GM10248 (cell line): ENCODE measurements at regions of chr9 and their contacts with region 1.

Region 1: DNA sequence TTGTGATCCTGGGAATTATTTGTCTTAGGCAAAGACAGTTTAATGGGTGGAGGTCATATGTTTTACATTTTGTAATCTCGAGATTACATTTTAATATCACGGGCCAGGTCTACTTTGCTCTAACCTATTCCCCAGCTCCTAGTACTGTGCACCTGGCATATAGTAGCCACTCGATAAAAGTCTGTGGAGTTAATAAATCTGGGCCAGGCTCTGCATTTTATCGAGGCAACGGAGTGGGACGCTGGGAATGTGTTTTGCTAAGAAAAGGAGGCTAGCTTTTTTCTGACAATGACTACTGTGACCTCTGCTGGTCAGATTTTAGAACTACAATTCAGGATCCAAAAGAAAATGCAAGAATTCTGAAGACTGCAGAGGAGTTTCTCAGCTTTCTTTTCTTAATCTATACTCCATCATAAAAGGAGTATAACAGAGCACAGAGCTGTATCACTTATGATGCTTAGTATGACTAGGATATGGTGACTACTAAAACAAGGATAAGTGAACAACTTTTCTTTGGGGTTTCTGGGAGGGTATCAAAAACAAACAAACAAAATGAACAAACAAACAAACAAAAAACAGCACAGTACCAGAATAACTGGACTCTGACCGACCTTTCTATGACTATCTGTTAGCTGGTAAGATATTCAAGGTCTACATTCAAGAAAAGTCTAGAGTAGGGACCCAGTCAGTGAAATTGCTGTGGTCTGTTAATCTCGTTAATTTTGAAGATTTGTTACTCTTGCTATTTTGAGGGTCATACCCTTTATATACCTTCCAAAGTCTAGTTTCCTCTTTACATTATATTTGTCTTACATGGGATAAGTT is 46.1 kb upstream of the CER1 start:
- DNase-seq: peak; percentile 21
- CTCF ChIP-seq: peak; percentile 57

Region 2: GRCh38 chr9:13427587-13427986 is 1341.0 kb before region 1 on chr9:
- CTCF ChIA-PET with region 1: interaction called, 14 read pairs
- POLR2A ChIA-PET with region 1: no interaction called
- DNase-seq: peak; percentile 36
- CTCF ChIP-seq: peak; percentile 53

Region 3: GRCh38 chr9:13665418-13666066 is 1103.1 kb before region 1 on chr9:
- CTCF ChIA-PET with region 1: no interaction called
- POLR2A ChIA-PET with region 1: no interaction called
- DNase-seq: no peak
- CTCF ChIP-seq: no peak

Region 4: DNA sequence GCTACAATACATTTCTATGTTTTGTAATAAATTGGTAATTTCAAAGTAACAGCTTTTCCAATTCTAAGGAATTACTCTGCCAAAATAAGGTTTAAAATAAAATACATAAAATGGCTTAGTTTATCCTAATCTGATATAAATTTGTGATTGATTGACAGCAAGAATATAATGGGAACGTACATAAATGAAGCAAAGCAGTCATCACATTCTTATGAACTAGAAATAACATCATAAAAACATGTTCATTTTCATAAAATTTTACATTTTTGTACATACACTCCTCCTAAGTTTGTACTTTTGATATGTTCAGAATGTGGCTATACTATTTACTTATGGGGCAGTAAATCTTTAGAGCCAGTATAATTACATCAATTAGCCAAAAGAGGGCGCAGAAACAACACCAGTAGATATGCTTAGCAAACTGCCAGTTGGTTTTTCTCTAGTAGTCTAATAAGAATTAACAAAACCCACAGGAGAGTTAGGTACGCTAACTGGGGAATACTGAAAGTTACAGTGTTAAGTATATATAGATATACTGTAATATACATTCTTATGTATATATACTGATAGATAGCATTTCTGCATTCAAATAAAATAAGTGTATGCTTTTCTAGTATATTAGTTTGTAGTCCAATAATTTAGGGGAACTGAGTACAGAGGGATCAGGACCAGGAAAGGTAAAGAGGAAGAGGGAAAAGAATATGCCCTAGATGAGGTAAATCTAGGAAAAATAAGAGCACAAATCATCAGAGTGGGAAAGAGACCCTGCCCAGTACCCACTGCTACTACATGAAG is 152.2 kb before region 1 on chr9:
- CTCF ChIA-PET with region 1: interaction called, 65 read pairs
- POLR2A ChIA-PET with region 1: no interaction called
- DNase-seq: no peak
- CTCF ChIP-seq: peak; percentile 67

Region 5: DNA sequence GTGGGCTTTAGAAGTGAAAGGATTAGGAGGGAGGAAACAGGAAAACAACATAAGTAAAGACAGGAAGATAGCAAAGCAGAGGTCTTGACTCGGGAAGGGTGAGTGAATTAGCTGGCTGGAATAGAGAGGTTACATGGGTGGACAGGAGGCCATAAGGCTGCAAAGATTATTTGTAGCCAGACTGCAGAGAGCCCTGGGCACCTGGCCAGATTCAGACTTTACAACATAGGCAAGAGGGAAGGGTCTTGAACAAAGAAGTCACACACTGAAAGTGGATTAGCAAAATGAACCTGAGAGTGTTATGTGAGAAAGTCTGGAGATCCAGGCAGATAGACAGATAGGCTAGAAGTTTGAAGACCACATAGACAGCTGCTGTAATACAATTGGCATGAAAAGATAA is 16.3 kb before region 1 on chr9:
- CTCF ChIA-PET with region 1: interaction called, 19 read pairs
- POLR2A ChIA-PET with region 1: no interaction called
- DNase-seq: no peak
- CTCF ChIP-seq: no peak

Region 6: DNA sequence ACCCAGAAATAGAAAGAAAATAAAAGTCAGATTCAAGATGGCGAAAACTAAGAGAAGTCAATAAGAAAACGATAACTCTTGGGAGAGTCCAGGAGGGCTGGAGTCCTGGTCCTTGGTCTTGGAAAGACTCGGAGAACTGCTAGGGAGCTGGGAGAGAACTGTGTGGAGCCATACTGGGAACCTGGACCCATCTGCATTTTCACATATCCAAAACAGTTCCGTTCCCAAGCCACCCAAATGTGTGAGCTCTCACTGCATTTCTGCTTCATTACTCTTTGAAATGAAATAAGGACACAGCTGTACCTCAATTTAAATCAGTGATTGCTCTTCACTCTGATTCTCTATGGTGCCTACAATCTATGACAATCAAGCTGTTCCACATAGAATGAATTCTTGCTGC is 22.0 kb after region 1 on chr9:
- CTCF ChIA-PET with region 1: interaction called, 15 read pairs
- POLR2A ChIA-PET with region 1: no interaction called
- DNase-seq: no peak
- CTCF ChIP-seq: no peak

Region 7: DNA sequence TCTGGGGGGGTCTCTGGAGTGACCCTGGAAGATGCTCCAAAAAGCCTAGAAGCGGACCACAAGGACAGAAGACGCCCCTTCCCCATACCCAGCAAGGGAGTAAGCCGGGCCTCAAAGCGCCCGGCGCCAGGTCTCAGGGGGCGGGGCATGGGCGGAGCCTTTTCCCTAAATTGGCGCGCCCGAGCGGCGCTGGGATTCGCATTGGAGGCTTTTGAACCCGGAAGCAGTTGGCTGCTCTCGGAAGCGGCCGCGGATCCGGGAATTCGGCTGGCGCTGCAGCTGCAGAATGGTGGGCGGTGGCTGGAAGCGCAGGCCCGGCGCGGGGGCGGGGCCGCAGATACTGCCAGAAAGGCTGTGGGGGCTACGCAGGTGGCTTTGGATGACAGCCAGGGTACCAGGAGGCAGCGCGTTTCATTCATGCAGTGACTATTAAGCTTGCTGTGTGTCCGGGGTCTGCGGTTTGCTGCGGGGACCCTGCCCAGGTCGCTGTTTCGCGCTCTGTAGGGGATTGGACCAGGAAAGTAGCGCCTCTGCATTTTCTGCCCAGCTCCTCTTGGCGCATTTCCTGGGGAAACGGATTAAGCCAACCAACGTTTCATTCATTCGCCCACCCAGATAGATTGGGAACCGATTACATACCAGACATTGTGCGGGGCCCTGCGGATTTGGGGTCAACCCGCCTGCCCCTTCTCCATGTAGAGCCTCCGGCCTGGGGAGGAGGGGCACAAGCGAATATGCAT is 224.6 kb after region 1 on chr9:
- CTCF ChIA-PET with region 1: no interaction called
- POLR2A ChIA-PET with region 1: no interaction called
- DNase-seq: peak; percentile 10
- CTCF ChIP-seq: no peak